Heart right ventricle (tissue), 16 donors: ENCODE measurements at regions of chr2 and their contacts with region 1.

Region 1: DNA sequence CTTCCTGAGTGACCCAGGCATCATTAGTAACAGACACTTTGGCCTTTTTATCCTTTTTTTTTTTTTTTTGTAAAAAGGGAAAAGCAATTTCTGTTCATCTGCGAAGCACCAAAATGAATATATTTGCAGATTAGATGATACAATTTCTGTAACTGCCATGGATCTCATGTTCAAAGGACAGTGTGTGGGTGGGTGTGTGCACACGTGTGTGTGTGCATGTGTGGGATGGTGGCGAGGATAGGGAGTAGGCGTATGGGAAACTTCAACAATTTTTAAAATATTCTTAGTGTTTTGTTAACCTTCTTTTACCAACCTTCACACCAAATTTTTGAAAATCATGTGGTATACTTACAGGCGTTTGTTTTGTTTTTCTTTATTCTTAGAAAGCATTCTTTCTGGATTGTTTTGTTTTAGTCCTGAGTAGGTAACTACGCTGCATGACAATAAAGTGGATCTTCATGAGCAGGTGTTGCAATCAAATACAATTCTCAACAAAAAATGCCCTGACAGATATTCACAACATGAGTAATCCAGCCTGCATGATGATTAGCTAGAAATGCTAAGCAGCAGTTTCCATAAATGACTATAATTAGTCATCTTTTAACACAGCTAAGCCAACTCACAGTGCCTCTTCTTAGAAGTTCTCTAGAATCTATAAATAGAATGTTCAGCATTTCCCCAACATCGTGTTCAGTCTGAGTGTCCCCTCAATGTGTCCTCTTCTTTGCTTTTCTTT is 53.5 kb upstream of the RMDN2 start:
- DNase-seq: no peak
- ATAC-seq: peak in 7 of 8 donors; percentile 3 to 52 (median 40)
- H3K4me3 ChIP-seq: no peak overlapping the region
- H3K27ac ChIP-seq: peak overlapping the region in 7 of 10 donors; percentile 43 to 84 (median 74)
- H3K4me1 ChIP-seq: peaks cover 16 to 94% (median 74%) of the 10 kb centered on the region in 9 donors
- H3K27me3 ChIP-seq: no peaks in the 10 kb centered on the region
- CTCF ChIP-seq: no peak

Region 2: GRCh38 chr2:37837628-37838328 is 33.8 kb before region 1 on chr2:
- intact Hi-C with region 1: loop called in 6 of 10 experiments (anchors 2 to 5 kb)
- DNase-seq: peak; percentile 24 to 34
- ATAC-seq: peak in 7 of 8 donors; percentile 68 to 93 (median 75)
- H3K4me3 ChIP-seq: no peak overlapping the region
- H3K27ac ChIP-seq: no peak overlapping the region
- H3K4me1 ChIP-seq: peaks cover 0 to 14% (median 7%) of the 10 kb centered on the region in 9 donors
- H3K27me3 ChIP-seq: no peaks in the 10 kb centered on the region
- CTCF ChIP-seq: no peak

Region 3: DNA sequence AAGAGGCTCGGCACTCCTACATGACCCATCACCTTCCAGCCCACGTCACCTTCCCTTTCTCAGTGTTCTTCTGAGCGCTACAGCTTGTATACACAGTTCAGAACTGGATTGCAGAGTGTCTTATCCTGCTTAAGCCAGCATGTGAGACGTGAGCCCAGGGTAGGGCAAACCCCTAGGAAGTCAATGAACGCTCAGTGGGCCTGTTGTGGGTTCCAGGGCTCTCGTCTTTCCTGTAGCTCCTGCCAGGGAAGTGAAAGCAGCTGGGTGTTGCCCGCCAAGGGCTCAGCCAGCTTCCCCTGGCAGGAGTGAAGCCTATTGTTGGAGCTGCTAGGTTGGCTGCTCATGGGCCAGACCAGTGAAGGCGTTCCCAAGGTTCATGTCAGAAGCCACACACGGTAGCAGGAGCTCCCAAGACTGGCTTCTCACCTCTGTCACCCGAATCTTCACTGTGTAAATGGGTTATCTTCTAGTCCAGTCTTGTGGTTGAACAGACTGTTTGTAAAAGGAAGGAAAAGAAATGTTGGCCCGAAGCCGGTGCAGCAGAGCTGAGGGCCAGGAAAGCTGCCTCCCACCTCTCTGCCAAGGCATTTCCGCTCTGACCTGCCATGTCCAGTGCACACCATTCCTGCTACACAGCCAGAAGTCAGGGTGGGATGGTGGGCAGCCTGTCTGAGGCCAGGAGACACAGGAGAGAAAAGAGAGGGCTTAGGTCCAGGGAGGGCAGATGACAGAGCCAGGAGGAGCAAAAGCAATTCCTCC is 16.2 kb before region 1 on chr2:
- intact Hi-C with region 1: loop called in 1 of 10 experiments (anchors 2 kb)
- DNase-seq: peak; percentile 55 to 57
- ATAC-seq: peak; percentile 34 to 82 (median 77)
- H3K4me3 ChIP-seq: peak overlapping the region in 1 of 10 donors; percentile 8
- H3K27ac ChIP-seq: peak overlapping the region; percentile 46 to 93 (median 86)
- H3K4me1 ChIP-seq: peaks cover 14 to 79% (median 57%) of the 10 kb centered on the region in 9 donors
- H3K27me3 ChIP-seq: no peaks in the 10 kb centered on the region
- CTCF ChIP-seq: no peak

Region 4: DNA sequence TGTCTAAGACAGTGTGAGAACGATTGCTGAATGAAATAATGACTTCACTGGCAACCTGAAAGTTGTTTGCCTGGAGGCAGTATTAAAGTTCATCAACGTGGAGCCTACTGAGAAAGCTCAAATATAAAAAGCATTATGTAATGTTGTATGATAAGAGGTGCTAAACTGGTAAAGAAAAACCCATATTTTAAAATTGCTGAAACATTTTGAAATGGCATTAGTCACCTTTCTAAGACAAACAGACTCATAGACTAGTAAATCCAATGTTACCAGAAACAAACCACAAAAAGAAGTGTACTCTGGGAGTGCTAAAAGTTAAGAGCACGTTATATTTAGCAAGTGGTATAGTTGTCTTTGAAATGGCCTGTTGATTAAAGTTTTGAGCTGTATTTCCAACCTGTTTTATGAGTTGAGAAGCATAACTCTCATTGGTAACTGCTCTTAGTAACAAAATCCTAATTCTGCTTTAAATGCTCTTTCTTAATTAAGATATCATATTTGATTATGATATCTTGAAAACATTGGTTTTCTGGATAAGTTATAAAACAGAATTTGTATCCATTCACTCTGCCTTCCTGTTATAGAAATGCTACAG is 141.6 kb after region 1 on chr2:
- intact Hi-C with region 1: no loop called
- DNase-seq: no peak
- ATAC-seq: no peak
- H3K4me3 ChIP-seq: no peak overlapping the region
- H3K27ac ChIP-seq: no peak overlapping the region
- H3K4me1 ChIP-seq: no peaks in the 10 kb centered on the region
- H3K27me3 ChIP-seq: no peaks in the 10 kb centered on the region
- CTCF ChIP-seq: no peak